Activated CD4-positive, alpha-beta T cell treated with anti-CD3 and anti-CD28 coated beads for 36 hours (primary cell): ENCODE measurements at regions of chr20 and their contacts with region 1.

Region 1: DNA sequence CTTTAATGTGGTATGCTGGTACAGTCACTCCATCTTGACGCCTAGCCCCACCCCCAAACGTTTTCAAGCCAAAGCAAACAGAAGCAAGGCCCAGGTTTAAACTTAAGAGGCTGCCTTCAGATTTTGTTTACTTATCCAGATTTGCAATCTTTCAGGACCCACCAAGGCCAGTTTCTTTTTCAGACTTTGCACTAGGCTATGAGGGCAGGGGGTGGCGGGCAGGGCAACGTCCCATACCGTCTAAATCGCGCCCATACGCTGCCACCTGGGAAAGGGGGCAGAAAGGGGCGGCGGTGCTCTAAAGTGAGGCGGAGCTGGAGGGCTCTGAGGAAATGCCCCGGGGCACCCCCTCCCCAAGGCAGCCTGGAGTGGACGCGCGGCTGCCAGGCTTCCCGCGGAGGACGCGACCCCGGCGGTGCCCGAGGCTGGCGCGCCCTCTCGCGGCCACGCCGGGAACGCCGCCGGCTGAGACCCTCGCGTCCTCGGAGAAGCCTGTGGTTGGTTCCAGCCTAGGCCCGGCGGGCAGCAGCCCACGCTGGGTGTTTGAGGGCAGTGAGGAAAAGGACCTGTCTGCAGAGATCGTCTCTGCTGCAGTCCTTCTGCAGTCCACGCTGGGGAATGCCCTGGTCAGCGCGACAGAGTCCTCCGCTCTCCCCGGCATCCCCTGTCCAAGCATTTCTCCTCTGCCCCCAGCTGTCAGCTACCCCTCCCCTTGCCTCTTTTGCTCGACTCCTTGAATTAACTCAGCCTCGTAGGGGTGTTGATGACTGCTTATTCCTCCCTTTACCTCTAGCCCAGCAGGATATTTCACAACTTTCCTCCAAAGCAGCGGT is 129.2 kb upstream of the PRND start:
- DNase-seq: peak; percentile 76
- ATAC-seq: peak; percentile 91
- H3K4me3 Mint-ChIP-seq: peak overlapping the region; percentile 51
- H3K27ac Mint-ChIP-seq: no peak overlapping the region
- H3K4me1 Mint-ChIP-seq: peaks cover 7% of the 10 kb centered on the region
- H3K27me3 Mint-ChIP-seq: peaks cover 10% of the 10 kb centered on the region

Region 2: GRCh38 chr20:4108495-4109306 is 483.8 kb before region 1 on chr20:
- CTCF ChIA-PET with region 1: interaction called, 5 read pairs
- POLR2A ChIA-PET with region 1: no interaction called
- intact Hi-C with region 1: loop called (anchors 1 to 2 kb)
- DNase-seq: peak; percentile 83
- ATAC-seq: peak; percentile 89
- H3K4me3 Mint-ChIP-seq: peak overlapping the region; percentile 14
- H3K27ac Mint-ChIP-seq: peak overlapping the region; percentile 82
- H3K4me1 Mint-ChIP-seq: peaks cover 17% of the 10 kb centered on the region
- H3K27me3 Mint-ChIP-seq: no peaks in the 10 kb centered on the region

Region 3: GRCh38 chr20:4247898-4248858 is 344.4 kb before region 1 on chr20:
- CTCF ChIA-PET with region 1: no interaction called
- POLR2A ChIA-PET with region 1: no interaction called
- intact Hi-C with region 1: loop called in 1 of 2 experiments (anchors 1 kb)
- DNase-seq: peak; percentile 18
- ATAC-seq: no peak
- H3K4me3 Mint-ChIP-seq: no peak overlapping the region
- H3K27ac Mint-ChIP-seq: no peak overlapping the region
- H3K4me1 Mint-ChIP-seq: peaks cover 2% of the 10 kb centered on the region
- H3K27me3 Mint-ChIP-seq: peaks cover 51% of the 10 kb centered on the region